H1 (cell line): ENCODE measurements at regions of chr3 and their contacts with region 1.

Region 1: DNA sequence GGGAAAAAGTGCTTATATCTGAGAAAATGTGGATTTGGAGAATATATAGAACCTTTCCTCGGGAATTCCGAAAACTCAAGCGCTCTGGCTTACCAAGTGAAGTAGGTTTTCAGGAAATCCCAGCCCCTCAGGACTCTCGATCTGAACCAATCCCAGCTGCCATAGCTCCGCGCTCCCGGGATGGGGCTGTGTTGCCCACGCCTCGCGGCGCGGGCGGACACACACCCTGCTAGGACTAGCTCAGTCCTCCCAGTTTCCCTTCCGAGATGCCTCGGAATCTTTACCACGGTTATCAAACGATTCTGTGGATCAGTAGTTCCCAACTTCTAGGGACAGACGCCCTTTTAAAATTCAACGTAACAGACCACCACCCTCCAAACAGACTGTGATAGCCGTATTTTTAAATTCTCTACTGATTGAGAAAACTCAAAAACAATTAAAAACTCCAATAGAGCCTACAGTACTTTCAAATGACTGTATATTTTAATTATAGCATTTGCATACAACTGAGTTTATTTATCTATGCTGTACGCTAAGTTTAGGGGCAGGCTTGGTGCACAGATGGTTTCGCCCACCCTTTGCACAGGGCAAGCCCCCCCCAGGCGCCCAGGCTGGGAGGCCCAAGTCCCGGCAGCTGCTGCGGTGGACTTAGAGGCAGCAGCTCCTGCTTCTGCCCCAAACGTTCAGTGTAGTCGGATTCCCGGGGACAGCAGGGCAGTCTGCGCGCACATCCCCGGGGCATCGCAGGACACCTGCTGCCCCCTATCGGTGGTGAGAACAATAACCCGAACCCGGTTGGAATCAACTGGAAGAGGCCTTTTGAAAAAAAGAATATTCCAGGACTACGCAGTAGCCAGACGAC is 52.3 kb downstream of the CCDC54 start:
- DNase-seq: peak; percentile 68 to 81
- H3K4me3 ChIP-seq: peak overlapping the region; percentile 37 to 76 (median 73)
- H3K27ac ChIP-seq: no peak overlapping the region
- H3K4me1 ChIP-seq: peaks cover 0 to 7% (median 5%) of the 10 kb centered on the region in 4 experiments; a peak in 5 of 7 replicates
- H3K27me3 ChIP-seq: peaks cover 0 to 17% (median 12%) of the 10 kb centered on the region in 4 experiments; a peak in 6 of 7 replicates
- CTCF ChIP-seq: peak; percentile 78 to 86 (median 86)
- EP300 ChIP-seq: no peak
- POLR2A ChIP-seq: 0 out of 3 replicates have a peak, but pooled peaks of 1 of the 2 experiments have one; percentile 41
- RAD21 ChIP-seq: peak; percentile 76 to 82

Region 2: GRCh38 chr3:107284612-107285011 is 144.9 kb before region 1 on chr3:
- CTCF ChIA-PET with region 1: interaction called, 13 read pairs
- POLR2A ChIA-PET with region 1: no interaction called
- DNase-seq: no peak
- H3K4me3 ChIP-seq: no peak overlapping the region
- H3K27ac ChIP-seq: no peak overlapping the region
- H3K4me1 ChIP-seq: peaks cover 0 to 17% (median 8%) of the 10 kb centered on the region in 4 experiments; a peak in 6 of 7 replicates
- H3K27me3 ChIP-seq: no peaks in the 10 kb centered on the region
- CTCF ChIP-seq: no peak
- EP300 ChIP-seq: no peak
- POLR2A ChIP-seq: no peak
- RAD21 ChIP-seq: no peak

Region 3: GRCh38 chr3:107414325-107414964 is 15.1 kb before region 1 on chr3:
- CTCF ChIA-PET with region 1: interaction called, 18 read pairs
- POLR2A ChIA-PET with region 1: interaction called, 3 read pairs
- DNase-seq: no peak
- H3K4me3 ChIP-seq: no peak overlapping the region
- H3K27ac ChIP-seq: no peak overlapping the region
- H3K4me1 ChIP-seq: no peaks in the 10 kb centered on the region
- H3K27me3 ChIP-seq: no peaks in the 10 kb centered on the region
- CTCF ChIP-seq: no peak
- EP300 ChIP-seq: no peak
- POLR2A ChIP-seq: no peak
- RAD21 ChIP-seq: no peak

Region 4: DNA sequence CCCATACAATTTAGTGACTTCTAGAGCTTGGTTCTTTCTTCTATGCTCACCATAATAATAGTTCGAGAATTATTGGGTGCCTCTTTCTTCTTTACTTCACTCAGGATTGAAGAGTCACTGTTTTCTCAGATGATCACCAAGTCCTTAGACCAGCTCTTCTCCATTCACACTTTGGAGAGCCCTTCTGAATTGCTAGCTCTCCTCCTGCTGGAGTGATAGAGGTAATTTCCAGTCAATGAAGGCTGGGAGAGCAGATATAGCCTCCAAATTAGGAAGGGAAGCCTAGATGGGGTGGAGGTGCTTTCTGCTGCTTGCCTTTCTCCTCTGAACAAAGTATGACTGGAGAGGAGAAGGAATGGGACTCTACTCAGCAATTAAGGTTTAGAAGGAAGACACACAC is 82.6 kb after region 1 on chr3:
- CTCF ChIA-PET with region 1: interaction called, 28 read pairs
- POLR2A ChIA-PET with region 1: interaction called, 4 read pairs
- DNase-seq: no peak
- H3K4me3 ChIP-seq: no peak overlapping the region
- H3K27ac ChIP-seq: no peak overlapping the region
- H3K4me1 ChIP-seq: no peaks in the 10 kb centered on the region
- H3K27me3 ChIP-seq: no peaks in the 10 kb centered on the region
- CTCF ChIP-seq: peak in 2 of 3 experiments; percentile 27; a peak in 2 of 4 replicates
- EP300 ChIP-seq: no peak
- POLR2A ChIP-seq: no peak
- RAD21 ChIP-seq: peak; percentile 52 to 57